Cardiac septum (tissue), 1 donor: ENCODE measurements at regions of chr20 and their contacts with region 1.

Region 1: GRCh38 chr20:3407771-3408637 is 535 bp upstream of the DNAAF9 start:
- DNase-seq: peak; percentile 87

Region 2: DNA sequence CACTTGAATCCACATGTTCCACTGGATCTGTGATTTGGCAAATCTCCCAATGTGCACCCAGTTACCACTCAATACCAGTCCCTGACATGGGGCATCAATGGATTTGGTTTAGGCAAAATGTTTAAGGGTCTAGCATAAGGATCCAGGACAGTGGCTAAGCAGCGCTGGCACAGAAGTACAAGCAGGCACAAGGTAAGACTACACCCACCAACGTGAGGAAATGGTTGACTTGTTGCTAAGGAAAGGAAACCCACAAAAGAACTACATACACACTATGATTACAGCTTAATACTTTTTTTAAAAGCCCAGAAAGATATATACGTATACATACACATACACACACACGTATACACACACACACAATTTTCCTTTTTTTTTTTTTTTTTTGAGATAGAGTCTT is 79.5 kb before region 1 on chr20:
- intact Hi-C with region 1: loop called (anchors 5 kb)
- DNase-seq: no peak

Region 3: GRCh38 chr20:3358676-3359340 is 49.2 kb before region 1 on chr20:
- intact Hi-C with region 1: loop called (anchors 10 kb)
- DNase-seq: no peak

Region 4: DNA sequence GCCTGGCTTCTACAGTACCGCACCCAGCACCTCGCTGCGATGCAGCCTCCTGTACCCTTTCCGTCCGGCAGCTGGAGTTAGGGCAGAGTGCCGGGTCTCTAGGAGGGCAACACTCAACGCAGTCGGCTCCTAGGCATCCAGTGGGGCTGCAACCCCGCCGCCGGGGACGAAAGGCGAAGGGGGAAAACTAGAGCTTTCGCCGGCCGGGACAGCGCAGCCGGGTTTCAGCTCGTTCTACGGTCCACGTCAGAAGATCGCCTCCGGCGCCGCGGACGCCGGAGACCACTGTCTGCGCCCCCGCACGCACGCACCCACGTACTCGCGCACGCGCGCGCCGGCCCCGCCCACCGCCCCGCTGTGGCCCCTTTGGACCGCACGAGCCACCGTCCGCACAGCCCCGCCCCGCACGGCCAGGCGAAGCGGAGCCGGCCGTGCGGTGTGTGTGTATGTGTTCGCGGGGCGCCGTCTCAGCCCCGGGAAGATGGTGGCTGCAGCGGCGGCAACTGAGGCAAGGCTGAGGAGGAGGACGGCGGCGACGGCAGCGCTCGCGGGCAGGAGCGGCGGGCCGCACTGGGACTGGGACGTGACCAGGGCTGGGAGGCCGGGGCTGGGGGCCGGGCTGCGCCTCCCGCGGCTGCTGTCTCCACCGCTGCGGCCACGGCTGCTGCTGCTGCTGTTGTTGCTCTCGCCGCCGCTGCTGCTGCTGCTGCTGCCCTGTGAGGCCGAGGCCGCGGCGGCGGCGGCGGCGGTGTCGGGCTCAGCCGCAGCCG is 62.8 kb after region 1 on chr20 and contains the start of gene ATRN:
- intact Hi-C with region 1: loop called (anchors 2 kb)
- DNase-seq: peak; percentile 95
- total RNA-seq, gene ATRN: 36.9 TPM